ENCODE measurements at regions of chr2 and their contacts with region 1.

Region 1: DNA sequence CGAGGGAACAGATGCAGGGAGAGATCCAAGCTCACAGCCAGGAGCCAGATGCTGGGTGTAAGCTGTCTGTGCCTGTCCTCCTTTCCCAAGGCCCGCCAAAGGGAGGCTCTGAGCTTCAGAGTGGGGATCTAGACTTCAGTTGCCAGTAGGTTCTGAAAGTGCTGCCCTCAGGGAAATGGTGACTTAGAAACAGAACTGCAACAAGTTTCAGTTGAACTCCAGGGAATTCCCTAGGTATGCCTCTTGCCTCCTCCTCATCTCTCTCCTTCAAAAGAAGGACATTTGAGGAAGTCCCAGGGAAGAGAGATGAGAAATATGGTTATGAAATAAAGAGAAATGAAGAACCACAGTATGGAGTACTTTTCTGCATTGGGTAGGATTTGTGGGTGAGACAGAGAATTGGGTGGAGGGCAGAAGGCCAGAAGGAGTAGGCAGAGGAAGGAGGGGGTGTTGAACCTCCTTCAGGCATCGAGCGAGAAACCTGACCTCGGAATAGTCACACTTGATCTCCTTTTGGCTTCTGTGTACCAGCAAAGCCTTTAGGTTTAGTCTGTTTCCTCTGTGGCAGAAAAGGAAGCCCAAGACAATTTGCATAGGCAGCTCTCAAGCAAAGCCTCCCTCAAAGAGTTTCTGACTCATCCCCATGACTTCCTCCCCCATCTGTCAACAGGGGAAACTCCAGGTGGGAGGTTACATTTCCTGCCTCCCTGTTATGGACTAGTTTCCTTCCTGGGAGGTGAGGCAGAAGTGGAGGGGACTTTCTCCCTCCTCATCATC is 45.7 kb downstream of the QPCT start:
- DNase-seq: peak; percentile 76
- H3K4me3 Mint-ChIP-seq: peak overlapping the region; percentile 8
- H3K27ac Mint-ChIP-seq: no peak overlapping the region
- H3K4me1 Mint-ChIP-seq: peaks cover 5% of the 10 kb centered on the region
- H3K27me3 Mint-ChIP-seq: peaks cover 15% of the 10 kb centered on the region

Region 2: GRCh38 chr2:37344453-37345361 is 45.5 kb before region 1 on chr2 and contains the start of gene QPCT:
- intact Hi-C with region 1: loop called (anchors 1 kb)
- DNase-seq: peak; percentile 13
- H3K4me3 Mint-ChIP-seq: peak within 1 kb of the TSS; percentile 76
- H3K27ac Mint-ChIP-seq: no peak within 1 kb of the TSS
- H3K4me1 Mint-ChIP-seq: peaks cover 23% of the 10 kb centered on the region
- H3K27me3 Mint-ChIP-seq: peaks cover 83% of the 10 kb centered on the region
- total RNA-seq, gene QPCT: 1.6 and 3.8 TPM in 2 replicates

Region 3: GRCh38 chr2:37472959-37473358 is 82.8 kb after region 1 on chr2:
- intact Hi-C with region 1: no loop called
- DNase-seq: no peak
- H3K4me3 Mint-ChIP-seq: no peak overlapping the region
- H3K27ac Mint-ChIP-seq: no peak overlapping the region
- H3K4me1 Mint-ChIP-seq: no peaks in the 10 kb centered on the region
- H3K27me3 Mint-ChIP-seq: peaks cover 4% of the 10 kb centered on the region

Region 4: GRCh38 chr2:37537316-37537715 is 147.1 kb after region 1 on chr2:
- intact Hi-C with region 1: loop called (anchors 5 kb)
- DNase-seq: no peak
- H3K4me3 Mint-ChIP-seq: no peak overlapping the region
- H3K27ac Mint-ChIP-seq: no peak overlapping the region
- H3K4me1 Mint-ChIP-seq: no peaks in the 10 kb centered on the region
- H3K27me3 Mint-ChIP-seq: peaks cover 15% of the 10 kb centered on the region

Region 5: DNA sequence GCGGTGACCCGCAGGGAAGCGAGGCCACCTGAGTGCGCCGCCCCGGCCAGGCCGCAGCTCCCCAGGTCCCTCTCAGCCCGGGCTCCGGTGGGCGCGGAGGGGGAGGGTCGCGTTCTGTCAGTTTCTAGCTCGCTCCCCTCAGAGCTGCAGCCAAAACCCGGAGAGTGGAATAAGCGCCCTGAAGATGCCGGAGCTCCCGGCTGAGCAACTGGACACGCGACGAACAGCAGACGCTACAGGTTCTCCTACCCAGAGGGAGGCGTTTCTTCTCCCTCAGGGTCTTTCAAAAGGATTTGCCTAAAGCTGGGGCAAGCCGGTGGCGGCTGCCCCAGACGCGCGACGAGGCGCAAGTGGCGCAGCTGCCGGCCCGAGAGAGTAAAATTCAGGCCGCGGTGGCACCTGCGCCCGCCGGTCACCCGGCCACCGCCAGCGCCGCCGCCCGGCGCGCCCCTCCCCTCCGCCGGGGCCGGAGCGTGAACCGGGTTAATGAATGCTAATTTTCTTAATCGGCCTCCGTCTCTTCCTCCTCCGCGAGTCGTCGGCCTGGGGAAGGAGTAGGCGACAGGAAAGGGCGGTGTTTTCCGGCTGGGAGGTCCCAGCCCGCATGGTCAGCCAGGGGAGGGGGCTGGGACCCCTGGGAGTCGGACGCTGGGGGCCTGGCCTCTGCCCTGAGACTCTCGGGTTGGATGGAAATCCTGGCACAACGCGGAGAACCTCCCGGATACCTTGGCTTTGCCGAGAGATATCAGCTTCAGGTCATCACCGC is 282.1 kb after region 1 on chr2:
- intact Hi-C with region 1: loop called (anchors 2 kb)
- DNase-seq: peak; percentile 59
- H3K4me3 Mint-ChIP-seq: peak overlapping the region; percentile 83
- H3K27ac Mint-ChIP-seq: peak overlapping the region; percentile 67
- H3K4me1 Mint-ChIP-seq: peaks cover 38% of the 10 kb centered on the region
- H3K27me3 Mint-ChIP-seq: peaks cover 8% of the 10 kb centered on the region

Region 6: DNA sequence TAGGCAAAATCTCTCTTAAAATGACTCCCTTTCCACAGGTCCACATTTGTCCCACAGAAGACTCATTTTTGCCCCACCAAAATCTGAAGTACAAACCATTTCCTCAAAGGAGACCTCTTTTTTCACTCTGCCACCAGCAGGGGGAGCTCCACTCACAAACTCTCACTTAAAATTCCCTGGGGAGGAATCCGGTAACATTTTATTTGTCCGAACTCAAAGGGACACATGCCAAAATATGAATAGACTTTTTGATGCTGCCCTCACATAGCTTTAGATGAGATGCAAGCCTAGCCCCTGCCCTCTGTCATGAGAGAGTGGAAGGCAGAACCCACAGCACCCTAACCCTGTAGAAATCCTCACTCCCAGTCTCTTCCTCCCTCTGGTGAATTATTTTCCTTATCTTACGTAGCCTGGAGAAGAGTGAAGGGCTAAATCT is 592.0 kb after region 1 on chr2:
- intact Hi-C with region 1: loop called (anchors 5 kb)
- DNase-seq: peak; percentile 16
- H3K4me3 Mint-ChIP-seq: no peak overlapping the region
- H3K27ac Mint-ChIP-seq: no peak overlapping the region
- H3K4me1 Mint-ChIP-seq: peaks cover 14% of the 10 kb centered on the region
- H3K27me3 Mint-ChIP-seq: peaks cover 9% of the 10 kb centered on the region